ENCODE measurements at regions of chr5 and their contacts with region 1.

Region 1: DNA sequence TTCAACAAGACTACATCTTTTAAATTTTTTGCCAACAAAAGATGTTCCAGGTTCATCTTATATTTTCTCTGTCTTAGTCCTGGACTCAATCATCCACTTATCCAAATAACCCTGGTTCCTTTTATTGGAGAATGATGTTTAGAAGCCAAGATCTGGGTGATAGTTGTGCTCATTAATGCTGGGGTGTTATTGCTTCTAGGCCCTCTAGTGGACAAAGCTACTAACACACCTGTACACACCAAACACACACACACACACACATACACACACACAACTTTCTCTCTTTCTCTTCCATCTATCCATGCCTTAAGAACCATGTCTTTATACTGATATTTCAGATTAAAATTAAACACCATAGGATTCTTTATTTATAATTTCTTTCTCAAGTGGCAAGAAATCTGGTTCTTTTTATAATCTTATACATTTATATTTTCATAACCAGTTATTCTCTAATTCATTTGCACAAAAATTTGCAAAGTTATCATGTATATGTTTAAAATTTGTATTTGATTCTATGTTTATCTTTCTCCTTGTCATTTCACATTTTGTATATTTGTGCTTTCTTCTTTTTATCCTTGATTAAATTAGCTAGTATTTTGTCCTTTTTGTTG is 179.1 kb upstream of the SMIM23 start:
- DNase-seq: peak; percentile 49 to 58 (median 54)
- ATAC-seq: peak; percentile 81
- H3K4me3 ChIP-seq: no peak overlapping the region
- H3K27ac ChIP-seq: no peak overlapping the region
- H3K4me1 ChIP-seq: no peaks in the 10 kb centered on the region
- H3K27me3 ChIP-seq: no peaks in the 10 kb centered on the region; a peak in 1 of 5 replicates
- CTCF ChIP-seq: peak; percentile 61 to 64 (median 61)
- EP300 ChIP-seq: no peak
- POLR2A ChIP-seq: no peak
- RAD21 ChIP-seq: peak; percentile 46 to 76

Region 2: GRCh38 chr5:171484460-171484899 is 122.0 kb before region 1 on chr5:
- CTCF ChIA-PET with region 1: interaction called, 5 read pairs
- POLR2A ChIA-PET with region 1: no interaction called
- in situ Hi-C with region 1: no loop called
- intact Hi-C with region 1: loop called (anchors 1 kb)
- DNase-seq: peak; percentile 57 to 88 (median 86)
- ATAC-seq: peak; percentile 85
- H3K4me3 ChIP-seq: no peak overlapping the region
- H3K27ac ChIP-seq: no peak overlapping the region
- H3K4me1 ChIP-seq: peaks cover 0 to 11% of the 10 kb centered on the region in 2 experiments; a peak in 1 of 5 replicates
- H3K27me3 ChIP-seq: peaks cover 5 to 44% of the 10 kb centered on the region in 2 experiments; a peak in 4 of 5 replicates
- CTCF ChIP-seq: peak; percentile 76 to 88 (median 78)
- EP300 ChIP-seq: no peak
- POLR2A ChIP-seq: no peak
- RAD21 ChIP-seq: peak; percentile 49 to 69